ENCODE measurements at regions of chr4 and their contacts with region 1.

Region 1: GRCh38 chr4:90293320-90293719 is 166.1 kb downstream of the CCSER1 start:
- DNase-seq: no peak

Region 2: DNA sequence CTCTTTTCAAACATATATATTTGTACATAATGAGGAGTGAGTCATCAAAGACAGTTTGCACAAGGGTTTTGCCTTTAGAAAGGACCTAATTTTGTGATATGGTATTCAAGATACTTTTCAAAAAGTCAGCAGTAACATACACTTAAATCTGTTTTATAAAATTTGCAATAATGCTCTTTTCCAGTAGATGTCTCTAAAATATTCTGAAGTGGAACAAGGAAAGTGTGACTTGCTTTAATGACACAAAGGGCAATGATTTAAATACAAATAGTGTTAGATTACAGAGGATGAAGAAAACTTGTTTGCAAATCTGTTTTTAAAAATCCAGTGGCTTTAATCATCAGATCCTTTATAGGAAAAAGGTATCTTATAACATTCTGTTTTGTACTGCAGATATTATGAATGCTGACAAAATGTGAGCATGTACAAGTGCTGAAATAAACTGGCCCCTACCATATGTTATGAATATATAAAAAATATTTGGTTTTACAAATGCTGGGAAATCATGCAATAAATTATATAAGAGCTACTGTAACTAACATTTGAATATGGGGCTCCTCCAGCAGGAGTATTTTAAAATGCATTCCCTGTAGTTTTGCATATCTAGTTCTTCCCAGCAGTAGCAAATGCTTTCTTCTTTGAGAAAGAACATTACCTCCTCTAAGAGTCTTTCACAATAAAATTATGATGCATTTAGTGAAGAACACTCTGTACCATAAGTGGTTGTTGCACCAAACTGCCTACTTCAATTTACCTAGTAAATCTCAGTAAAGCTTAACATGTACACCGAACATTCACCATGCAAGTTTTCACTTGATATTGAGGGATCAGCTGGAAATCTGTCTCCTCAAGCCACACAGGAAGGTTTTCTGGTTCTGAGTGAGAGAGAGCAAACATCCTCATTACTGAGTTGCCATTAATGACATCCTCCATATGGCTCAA is 378.4 kb before region 1 on chr4:
- intact Hi-C with region 1: loop called (anchors 5 kb)
- DNase-seq: no peak

Region 3: GRCh38 chr4:90025248-90025647 is 268.1 kb before region 1 on chr4:
- intact Hi-C with region 1: loop called (anchors 2 kb)
- DNase-seq: no peak

Region 4: DNA sequence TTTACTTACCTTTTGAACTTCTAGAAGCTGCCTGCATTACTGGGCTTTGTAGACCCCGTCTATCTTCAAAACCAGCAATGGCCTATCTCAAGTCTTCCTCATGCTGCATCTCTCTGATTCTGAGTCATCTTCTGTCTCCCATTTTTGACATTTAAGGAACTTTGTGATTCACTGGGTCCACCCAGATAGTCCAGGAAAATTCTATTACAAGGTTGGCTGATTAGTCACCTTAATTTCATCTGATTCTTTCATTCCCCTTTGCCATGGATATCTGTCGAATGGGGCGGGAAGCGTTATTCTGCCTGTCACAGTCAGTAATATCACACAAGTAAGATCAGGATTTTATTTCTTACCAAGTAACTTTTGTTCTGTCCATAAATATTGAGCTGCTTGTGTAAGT is 451.9 kb after region 1 on chr4:
- intact Hi-C with region 1: no loop called
- DNase-seq: no peak